H1 (cell line): ENCODE measurements at regions of chr2 and their contacts with region 1.

Region 1: GRCh38 chr2:101252408-101253012 is at the start of gene CNOT11:
- DNase-seq: peak; percentile 95 to 97
- H3K4me3 ChIP-seq: peak within 1 kb of the TSS; percentile 77 to 94 (median 90)
- H3K27ac ChIP-seq: peak within 1 kb of the TSS; percentile 70; the same call in 1 of the 2 replicates
- H3K4me1 ChIP-seq: peaks cover 0 to 18% (median 10%) of the 10 kb centered on the region in 4 experiments; a peak in 4 of 7 replicates
- H3K27me3 ChIP-seq: no peaks in the 10 kb centered on the region
- CTCF ChIP-seq: no peak
- EP300 ChIP-seq: no peak
- POLR2A ChIP-seq: peak; percentile 81 to 86
- RAD21 ChIP-seq: no peak
- total RNA-seq, gene CNOT11: 54.6 and 56.5 TPM in 2 replicates

Region 2: GRCh38 chr2:100976645-100977391 is 275.7 kb before region 1 on chr2:
- CTCF ChIA-PET with region 1: no interaction called
- POLR2A ChIA-PET with region 1: no interaction called
- DNase-seq: no peak
- H3K4me3 ChIP-seq: no peak overlapping the region
- H3K27ac ChIP-seq: no peak overlapping the region
- H3K4me1 ChIP-seq: peaks cover 0 to 2% (median 0%) of the 10 kb centered on the region in 4 experiments; a peak in 2 of 7 replicates
- H3K27me3 ChIP-seq: no peaks in the 10 kb centered on the region
- CTCF ChIP-seq: no peak
- EP300 ChIP-seq: no peak
- POLR2A ChIP-seq: no peak
- RAD21 ChIP-seq: no peak

Region 3: GRCh38 chr2:101007415-101008345 is 244.8 kb before region 1 on chr2:
- CTCF ChIA-PET with region 1: interaction called, 5 read pairs
- POLR2A ChIA-PET with region 1: interaction called, 15 read pairs
- DNase-seq: no peak
- H3K4me3 ChIP-seq: no peak overlapping the region
- H3K27ac ChIP-seq: no peak overlapping the region
- H3K4me1 ChIP-seq: peaks cover 0 to 8% (median 7%) of the 10 kb centered on the region in 4 experiments; a peak in 4 of 7 replicates
- H3K27me3 ChIP-seq: no peaks in the 10 kb centered on the region; a peak in 1 of 7 replicates
- CTCF ChIP-seq: no peak
- EP300 ChIP-seq: no peak
- POLR2A ChIP-seq: peak; percentile 75 to 76
- RAD21 ChIP-seq: no peak

Region 4: DNA sequence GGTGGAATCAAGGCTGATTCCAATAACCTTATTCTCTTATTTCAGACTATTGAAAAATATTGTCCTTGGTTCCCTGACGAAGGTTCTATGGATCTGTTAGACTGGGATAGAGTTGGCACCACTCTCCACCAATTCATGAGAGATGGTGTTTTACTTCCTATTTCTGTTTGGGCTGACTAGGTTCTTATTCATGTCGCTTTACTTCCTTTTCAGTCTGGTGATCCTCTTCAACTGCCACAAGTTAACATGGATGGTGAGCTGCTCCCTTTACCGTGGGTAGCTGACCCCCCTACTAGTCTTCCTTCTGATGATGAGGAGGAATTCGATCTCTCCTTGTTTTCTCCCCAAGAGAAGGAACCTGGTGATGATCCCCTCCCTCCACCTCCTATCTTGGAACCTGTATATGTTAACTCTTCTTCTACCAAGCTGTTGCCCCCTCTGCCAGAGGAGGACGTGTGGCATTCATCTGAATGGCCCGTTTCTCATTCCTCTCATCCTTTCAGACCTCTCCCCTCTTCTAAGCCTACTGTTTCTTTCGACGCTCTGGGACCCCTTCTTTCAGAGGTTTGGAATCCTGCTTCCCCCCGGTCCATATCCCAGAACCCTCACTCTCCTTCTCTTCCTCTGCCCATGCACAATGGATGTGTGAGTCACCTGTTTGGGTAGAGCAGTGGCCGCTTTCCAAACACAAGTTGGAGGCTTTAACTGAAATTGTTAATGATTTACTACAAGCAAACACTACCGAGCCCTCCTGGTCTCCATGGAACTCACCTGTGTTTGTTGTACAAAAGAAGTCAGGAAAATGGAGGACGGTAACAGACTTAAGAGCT is 13.4 kb before region 1 on chr2:
- CTCF ChIA-PET with region 1: interaction called, 45 read pairs
- POLR2A ChIA-PET with region 1: interaction called, 10 read pairs
- DNase-seq: no peak
- H3K4me3 ChIP-seq: no peak overlapping the region
- H3K27ac ChIP-seq: no peak overlapping the region
- H3K4me1 ChIP-seq: no peaks in the 10 kb centered on the region
- H3K27me3 ChIP-seq: no peaks in the 10 kb centered on the region
- CTCF ChIP-seq: no peak
- EP300 ChIP-seq: no peak
- POLR2A ChIP-seq: no peak
- RAD21 ChIP-seq: no peak

Region 5: GRCh38 chr2:101272045-101272784 is 19.7 kb after region 1 on chr2:
- CTCF ChIA-PET with region 1: interaction called, 4 read pairs
- POLR2A ChIA-PET with region 1: interaction called, 17 read pairs
- DNase-seq: no peak
- H3K4me3 ChIP-seq: no peak overlapping the region
- H3K27ac ChIP-seq: no peak overlapping the region
- H3K4me1 ChIP-seq: no peaks in the 10 kb centered on the region
- H3K27me3 ChIP-seq: no peaks in the 10 kb centered on the region; a peak in 1 of 7 replicates
- CTCF ChIP-seq: no peak
- EP300 ChIP-seq: no peak
- POLR2A ChIP-seq: no peak
- RAD21 ChIP-seq: no peak